Naive thymus-derived CD4-positive, alpha-beta T cell (primary cell): ENCODE measurements at regions of chr9 and their contacts with region 1.

Region 1: GRCh38 chr9:129460323-129461261 is 160.3 kb downstream of the C9orf50 start:
- DNase-seq: peak; percentile 42 to 86 (median 64)
- ATAC-seq: peak; percentile 86
- H3K4me3 ChIP-seq: peak overlapping the region; percentile 25
- H3K4me3 Mint-ChIP-seq: peak overlapping the region; percentile 67 to 89 (median 80)
- H3K27ac ChIP-seq: peak overlapping the region; percentile 68
- H3K27ac Mint-ChIP-seq: peak overlapping the region in 8 of 9 donors; percentile 51 to 96 (median 78)
- H3K4me1 ChIP-seq: peaks cover 32 to 35% of the 10 kb centered on the region in 2 donors
- H3K4me1 Mint-ChIP-seq: peaks cover 16 to 46% (median 41%) of the 10 kb centered on the region in 7 donors
- H3K27me3 ChIP-seq: no peaks in the 10 kb centered on the region
- H3K27me3 Mint-ChIP-seq: peaks cover 0 to 9% (median 0%) of the 10 kb centered on the region in 5 donors

Region 2: GRCh38 chr9:129383561-129384416 is 76.8 kb before region 1 on chr9:
- CTCF ChIA-PET with region 1: interaction called, 3 read pairs
- POLR2A ChIA-PET with region 1: interaction called, 3 read pairs
- intact Hi-C with region 1: loop called in 1 of 2 experiments (anchors 2 kb)
- DNase-seq: peak; percentile 60 to 87 (median 79)
- ATAC-seq: peak; percentile 96
- H3K4me3 ChIP-seq: peak overlapping the region; percentile 62
- H3K4me3 Mint-ChIP-seq: peak overlapping the region; percentile 70 to 86 (median 82)
- H3K27ac ChIP-seq: peak overlapping the region; percentile 82
- H3K27ac Mint-ChIP-seq: peak overlapping the region; percentile 72 to 96 (median 92)
- H3K4me1 ChIP-seq: peaks cover 0 to 12% of the 10 kb centered on the region in 2 donors
- H3K4me1 Mint-ChIP-seq: peaks cover 8 to 19% (median 10%) of the 10 kb centered on the region in 7 donors
- H3K27me3 ChIP-seq: no peaks in the 10 kb centered on the region
- H3K27me3 Mint-ChIP-seq: peaks cover 0 to 9% (median 0%) of the 10 kb centered on the region in 5 donors

Region 3: GRCh38 chr9:129436751-129437625 is 23.6 kb before region 1 on chr9:
- CTCF ChIA-PET with region 1: no interaction called
- POLR2A ChIA-PET with region 1: interaction called, 9 read pairs
- intact Hi-C with region 1: loop called (anchors 1 to 2 kb)
- DNase-seq: peak in 8 of 9 donors; percentile 21 to 52 (median 45)
- ATAC-seq: peak; percentile 75
- H3K4me3 ChIP-seq: peak overlapping the region; percentile 62
- H3K4me3 Mint-ChIP-seq: peak overlapping the region; percentile 80 to 93 (median 85)
- H3K27ac ChIP-seq: peak overlapping the region; percentile 32
- H3K27ac Mint-ChIP-seq: peak overlapping the region in 7 of 9 donors; percentile 25 to 89 (median 70)
- H3K4me1 ChIP-seq: peaks cover 10 to 19% of the 10 kb centered on the region in 2 donors
- H3K4me1 Mint-ChIP-seq: peaks cover 21 to 37% (median 27%) of the 10 kb centered on the region in 7 donors
- H3K27me3 ChIP-seq: peaks cover 5 to 8% of the 10 kb centered on the region in 2 donors
- H3K27me3 Mint-ChIP-seq: peaks cover 27 to 73% (median 32%) of the 10 kb centered on the region in 5 donors

Region 4: DNA sequence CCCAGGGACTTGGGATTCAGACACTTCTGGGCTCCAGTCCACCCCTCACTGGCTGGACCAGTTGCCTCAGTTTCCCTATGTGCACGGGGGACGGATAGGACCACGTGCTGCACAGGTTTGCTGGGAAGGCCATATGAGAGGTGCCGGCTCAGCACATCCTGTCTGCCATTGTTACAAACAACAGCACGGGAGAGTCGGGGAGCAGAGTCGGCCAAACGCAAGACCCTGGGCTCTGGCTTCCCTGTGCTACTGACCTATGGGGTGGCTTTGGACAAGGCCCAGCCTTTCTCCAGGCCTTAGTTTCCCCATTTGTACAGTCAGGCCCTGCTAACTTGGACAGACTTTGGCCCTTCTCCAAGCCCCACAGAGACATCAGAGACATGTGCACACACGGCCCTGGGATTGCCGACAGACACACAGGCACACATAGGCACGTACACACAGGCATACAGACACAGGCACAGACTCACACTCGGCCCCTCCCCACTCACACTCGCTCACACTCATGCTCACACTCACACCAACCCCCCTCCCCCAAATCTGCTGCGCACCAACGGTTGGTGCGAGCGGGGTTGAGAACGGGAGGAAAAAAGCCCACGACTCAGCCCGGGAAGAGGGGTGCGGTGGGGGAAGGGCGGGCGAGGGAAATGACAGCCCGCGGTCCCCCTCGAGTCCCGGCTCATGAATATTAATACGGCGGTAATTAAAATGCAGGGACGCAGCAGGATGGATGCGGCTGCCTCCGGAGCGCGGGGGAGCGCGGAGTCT is 27.2 kb after region 1 on chr9:
- CTCF ChIA-PET with region 1: interaction called, 3 read pairs
- POLR2A ChIA-PET with region 1: interaction called, 7 read pairs
- intact Hi-C with region 1: loop called (anchors 1 kb)
- DNase-seq: peak in 5 of 9 donors; percentile 29 to 54 (median 43)
- ATAC-seq: peak; percentile 3
- H3K4me3 ChIP-seq: peak overlapping the region; percentile 70
- H3K4me3 Mint-ChIP-seq: peak overlapping the region; percentile 75 to 92 (median 90)
- H3K27ac ChIP-seq: peak overlapping the region; percentile 66
- H3K27ac Mint-ChIP-seq: peak overlapping the region; percentile 87 to 99 (median 94)
- H3K4me1 ChIP-seq: peaks cover 32 to 46% of the 10 kb centered on the region in 2 donors
- H3K4me1 Mint-ChIP-seq: peaks cover 36 to 68% (median 58%) of the 10 kb centered on the region in 7 donors
- H3K27me3 ChIP-seq: no peaks in the 10 kb centered on the region
- H3K27me3 Mint-ChIP-seq: no peaks in the 10 kb centered on the region

Region 5: DNA sequence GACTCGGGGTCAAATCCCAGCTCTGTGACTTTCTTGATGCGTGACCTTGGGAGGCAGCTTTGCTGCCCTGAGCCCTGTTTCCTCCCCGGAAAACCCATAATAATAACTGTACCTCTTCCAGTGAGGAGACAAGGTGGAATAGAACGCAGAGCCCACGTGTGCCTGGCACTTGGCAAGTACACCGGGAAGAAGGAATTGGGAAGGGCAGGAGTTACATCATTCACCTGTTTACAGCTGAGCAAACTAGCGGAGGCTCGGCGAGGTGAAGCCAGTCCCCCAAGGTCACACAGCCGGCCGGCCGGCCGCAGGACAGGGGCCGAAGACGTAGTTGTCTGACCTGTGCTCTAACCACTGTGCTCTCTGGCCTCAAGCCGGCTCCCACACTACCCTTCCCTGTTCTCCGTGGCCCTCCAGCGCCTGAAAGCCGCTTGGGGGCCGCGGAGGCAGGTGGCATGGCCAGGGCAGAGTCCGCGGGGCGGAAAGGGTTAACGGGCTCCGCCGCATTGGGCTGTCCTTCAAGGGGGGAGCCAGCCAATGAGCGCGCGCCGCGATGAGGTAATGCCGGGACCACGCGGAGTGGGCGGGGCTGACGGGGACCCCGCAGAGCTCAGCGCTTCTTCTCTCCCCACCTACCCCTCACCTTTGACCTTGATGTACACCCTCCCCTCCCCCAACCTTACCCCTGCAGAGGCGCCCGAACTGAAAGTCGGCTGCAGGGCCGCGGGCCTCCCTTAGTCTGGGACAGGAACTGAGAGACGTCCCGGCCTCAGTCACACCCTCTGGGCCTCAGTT is 35.1 kb after region 1 on chr9:
- CTCF ChIA-PET with region 1: no interaction called
- POLR2A ChIA-PET with region 1: no interaction called
- intact Hi-C with region 1: loop called in 1 of 2 experiments (anchors 2 kb)
- DNase-seq: peak; percentile 64 to 84 (median 71)
- ATAC-seq: peak; percentile 89
- H3K4me3 ChIP-seq: peak overlapping the region; percentile 79
- H3K4me3 Mint-ChIP-seq: peak overlapping the region; percentile 73 to 87 (median 80)
- H3K27ac ChIP-seq: peak overlapping the region; percentile 35
- H3K27ac Mint-ChIP-seq: peak overlapping the region in 8 of 9 donors; percentile 11 to 92 (median 41)
- H3K4me1 ChIP-seq: peaks cover 19 to 20% of the 10 kb centered on the region in 2 donors
- H3K4me1 Mint-ChIP-seq: peaks cover 10 to 49% (median 19%) of the 10 kb centered on the region in 7 donors
- H3K27me3 ChIP-seq: no peaks in the 10 kb centered on the region
- H3K27me3 Mint-ChIP-seq: no peaks in the 10 kb centered on the region

Region 6: DNA sequence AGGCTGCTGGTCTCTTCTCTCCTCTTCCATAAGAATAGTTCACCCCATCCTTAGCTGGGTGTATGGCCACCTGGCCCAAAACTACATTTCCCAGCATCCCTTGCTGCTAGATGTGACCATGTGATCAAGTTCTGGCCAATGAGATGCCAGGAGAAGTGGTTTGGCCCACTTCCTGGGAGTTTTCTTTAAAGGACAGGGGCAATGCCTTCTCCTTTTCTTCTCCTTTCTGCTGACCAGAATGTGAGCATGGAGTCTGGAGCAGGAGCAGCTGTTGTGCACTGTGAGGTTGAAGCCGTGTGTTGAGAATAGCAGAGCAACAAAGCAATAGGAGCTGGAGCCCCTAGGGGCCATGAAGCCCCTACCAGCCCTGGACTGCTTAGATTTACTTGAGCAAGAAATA is 123.5 kb after region 1 on chr9:
- CTCF ChIA-PET with region 1: no interaction called
- POLR2A ChIA-PET with region 1: no interaction called
- intact Hi-C with region 1: loop called in 1 of 2 experiments (anchors 2 kb)
- DNase-seq: peak in 8 of 9 donors; percentile 51 to 69 (median 62)
- ATAC-seq: peak; percentile 88
- H3K4me3 ChIP-seq: no peak overlapping the region
- H3K4me3 Mint-ChIP-seq: peak overlapping the region in 7 of 10 donors; percentile 4 to 65 (median 31)
- H3K27ac ChIP-seq: peak overlapping the region; percentile 30
- H3K27ac Mint-ChIP-seq: peak overlapping the region; percentile 43 to 92 (median 76)
- H3K4me1 ChIP-seq: peaks cover 25 to 26% of the 10 kb centered on the region in 2 donors
- H3K4me1 Mint-ChIP-seq: peaks cover 15 to 88% (median 53%) of the 10 kb centered on the region in 7 donors
- H3K27me3 ChIP-seq: no peaks in the 10 kb centered on the region
- H3K27me3 Mint-ChIP-seq: no peaks in the 10 kb centered on the region

Region 7: GRCh38 chr9:129610473-129611301 is 150.1 kb after region 1 on chr9:
- CTCF ChIA-PET with region 1: no interaction called
- POLR2A ChIA-PET with region 1: no interaction called
- intact Hi-C with region 1: loop called in 1 of 2 experiments (anchors 2 kb)
- DNase-seq: peak; percentile 53 to 79 (median 71)
- ATAC-seq: peak; percentile 83
- H3K4me3 ChIP-seq: peak overlapping the region; percentile 52
- H3K4me3 Mint-ChIP-seq: peak overlapping the region; percentile 57 to 96 (median 80)
- H3K27ac ChIP-seq: peak overlapping the region; percentile 17
- H3K27ac Mint-ChIP-seq: peak overlapping the region in 5 of 9 donors; percentile 62 to 85 (median 67)
- H3K4me1 ChIP-seq: peaks cover 19 to 21% of the 10 kb centered on the region in 2 donors
- H3K4me1 Mint-ChIP-seq: peaks cover 13 to 44% (median 30%) of the 10 kb centered on the region in 7 donors
- H3K27me3 ChIP-seq: no peaks in the 10 kb centered on the region
- H3K27me3 Mint-ChIP-seq: peaks cover 0 to 4% (median 0%) of the 10 kb centered on the region in 5 donors